Activated CD4-positive, alpha-beta memory T cell treated with anti-CD3 and anti-CD28 coated beads for 36 hours (primary cell): ENCODE measurements at regions of chr2 and their contacts with region 1.

Region 1: GRCh38 chr2:143259368-143259958 is 130.2 kb downstream of the ARHGAP15 start:
- DNase-seq: peak; percentile 79
- H3K4me3 Mint-ChIP-seq: peak overlapping the region; percentile 63
- H3K27ac Mint-ChIP-seq: peak overlapping the region; percentile 89
- H3K4me1 Mint-ChIP-seq: peaks cover 85% of the 10 kb centered on the region
- H3K27me3 Mint-ChIP-seq: no peaks in the 10 kb centered on the region

Region 2: DNA sequence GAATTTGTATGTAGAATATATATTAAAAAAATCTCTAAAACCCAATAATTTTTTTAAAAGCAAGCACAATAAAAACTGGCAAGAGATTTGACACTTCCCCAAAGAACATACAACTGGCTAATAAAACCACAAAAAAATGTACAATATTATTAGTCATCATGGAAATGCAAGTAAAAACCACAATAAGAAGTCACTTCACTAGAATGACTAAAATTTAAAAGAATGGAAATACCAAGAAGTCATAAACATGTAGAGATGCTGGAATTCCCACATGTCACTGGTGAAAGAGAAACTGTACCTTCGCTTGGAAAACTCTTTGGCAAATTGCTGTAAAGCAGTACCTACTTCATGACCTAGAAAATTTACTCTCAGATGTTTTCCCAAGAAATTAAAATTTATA is 425.4 kb before region 1 on chr2:
- CTCF ChIA-PET with region 1: no interaction called
- POLR2A ChIA-PET with region 1: no interaction called
- intact Hi-C with region 1: no loop called
- DNase-seq: no peak
- H3K4me3 Mint-ChIP-seq: no peak overlapping the region
- H3K27ac Mint-ChIP-seq: no peak overlapping the region
- H3K4me1 Mint-ChIP-seq: no peaks in the 10 kb centered on the region
- H3K27me3 Mint-ChIP-seq: peaks cover 2% of the 10 kb centered on the region

Region 3: GRCh38 chr2:142880260-142880659 is 379.2 kb before region 1 on chr2:
- CTCF ChIA-PET with region 1: no interaction called
- POLR2A ChIA-PET with region 1: no interaction called
- intact Hi-C with region 1: no loop called
- DNase-seq: no peak
- H3K4me3 Mint-ChIP-seq: no peak overlapping the region
- H3K27ac Mint-ChIP-seq: no peak overlapping the region
- H3K4me1 Mint-ChIP-seq: no peaks in the 10 kb centered on the region
- H3K27me3 Mint-ChIP-seq: no peaks in the 10 kb centered on the region

Region 4: GRCh38 chr2:143128681-143129580 is 130.5 kb before region 1 on chr2 and contains the start of gene ARHGAP15:
- CTCF ChIA-PET with region 1: interaction called, 26 read pairs
- POLR2A ChIA-PET with region 1: interaction called, 22 read pairs
- intact Hi-C with region 1: loop called (anchors 1 kb)
- DNase-seq: peak; percentile 85
- H3K4me3 Mint-ChIP-seq: peak within 1 kb of the TSS; percentile 83
- H3K27ac Mint-ChIP-seq: peak within 1 kb of the TSS; percentile 100
- H3K4me1 Mint-ChIP-seq: peaks cover 29% of the 10 kb centered on the region
- H3K27me3 Mint-ChIP-seq: no peaks in the 10 kb centered on the region
- total RNA-seq, gene ARHGAP15: 70.2 to 71.2 TPM

Region 5: DNA sequence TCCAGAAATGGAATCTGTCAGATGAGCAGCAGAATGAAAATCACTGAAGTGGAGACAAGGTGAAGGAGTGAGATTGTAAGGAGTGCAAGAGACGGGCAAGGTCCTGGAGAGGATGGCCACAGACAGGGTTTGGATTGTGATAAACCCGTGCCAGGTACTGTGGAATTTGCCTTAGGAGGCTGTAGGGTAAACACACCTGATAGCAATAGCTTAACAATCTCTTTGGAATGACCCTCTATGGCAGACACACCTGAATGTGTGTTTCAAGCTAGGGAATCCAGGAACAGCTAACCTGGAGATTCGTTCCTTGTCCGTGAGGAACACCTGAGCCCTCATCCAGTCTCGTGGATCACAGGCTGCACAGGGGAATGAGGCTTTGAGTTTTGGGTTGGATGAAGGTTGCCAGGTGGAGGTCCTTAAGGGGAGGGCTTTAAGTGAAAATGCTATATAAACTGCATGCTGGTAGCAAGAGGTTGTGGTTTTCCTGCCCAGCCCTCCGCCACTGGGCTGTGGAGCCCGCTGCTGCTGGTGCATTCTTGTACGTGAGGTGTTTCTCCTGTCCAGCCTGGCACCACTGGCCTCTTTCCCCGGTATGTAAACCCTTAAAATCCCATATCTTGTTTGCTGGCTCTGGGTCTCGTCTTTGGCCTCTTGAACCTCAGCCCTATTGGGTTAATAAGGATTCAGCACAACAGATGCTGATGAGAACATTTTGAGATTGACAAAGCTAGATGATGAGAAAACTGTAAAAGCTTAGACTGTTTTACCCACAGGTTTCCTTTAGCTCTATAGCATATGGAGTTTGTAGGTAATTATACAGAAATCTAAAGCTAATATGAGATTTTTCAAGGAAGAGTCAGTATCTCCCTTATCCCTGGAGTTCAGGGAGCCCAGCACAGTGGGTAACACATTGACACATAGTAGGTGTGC is 12.4 kb before region 1 on chr2:
- CTCF ChIA-PET with region 1: interaction called, 28 read pairs
- POLR2A ChIA-PET with region 1: interaction called, 4 read pairs
- intact Hi-C with region 1: loop called (anchors 1 kb)
- DNase-seq: peak; percentile 49
- H3K4me3 Mint-ChIP-seq: no peak overlapping the region
- H3K27ac Mint-ChIP-seq: no peak overlapping the region
- H3K4me1 Mint-ChIP-seq: peaks cover 32% of the 10 kb centered on the region
- H3K27me3 Mint-ChIP-seq: no peaks in the 10 kb centered on the region

Region 6: DNA sequence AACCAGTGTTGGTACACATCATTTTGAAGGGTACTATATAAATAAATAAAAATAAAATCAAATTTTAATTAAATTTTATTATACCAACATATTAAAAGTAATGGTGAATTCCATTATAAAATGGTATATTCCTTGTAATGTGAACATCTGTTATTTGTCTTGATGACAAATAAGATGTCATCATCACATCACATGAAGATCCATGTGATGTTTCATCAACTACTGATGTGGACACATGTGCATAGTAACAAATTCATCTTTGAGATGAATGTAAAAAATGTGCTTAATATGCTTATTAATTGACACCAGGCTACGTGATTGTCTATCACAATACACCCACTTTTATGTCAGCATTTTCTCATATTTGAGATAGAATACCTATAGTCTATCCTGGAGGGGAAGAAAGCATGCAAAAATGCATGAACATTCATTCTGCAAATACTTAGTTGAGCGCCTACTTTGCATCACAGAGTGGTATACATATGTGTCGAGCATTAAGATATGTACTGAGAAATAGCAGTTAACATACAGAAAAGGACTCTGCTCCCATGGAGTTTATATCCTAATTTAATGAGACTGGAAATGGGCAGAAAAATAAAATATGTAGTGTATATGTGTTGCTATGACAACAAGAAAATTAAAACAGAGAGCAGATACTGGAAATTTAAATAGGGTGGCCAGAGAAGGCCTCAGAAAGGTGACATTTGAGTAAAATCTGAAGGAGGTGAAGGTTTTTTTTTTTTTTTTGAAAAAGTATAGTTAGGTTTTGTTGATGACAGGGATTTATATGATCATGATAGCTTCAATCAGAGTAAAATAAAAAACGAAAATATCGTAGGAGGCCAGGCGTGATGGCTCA is 150.8 kb after region 1 on chr2:
- CTCF ChIA-PET with region 1: no interaction called
- POLR2A ChIA-PET with region 1: no interaction called
- intact Hi-C with region 1: no loop called
- DNase-seq: no peak
- H3K4me3 Mint-ChIP-seq: no peak overlapping the region
- H3K27ac Mint-ChIP-seq: no peak overlapping the region
- H3K4me1 Mint-ChIP-seq: peaks cover 42% of the 10 kb centered on the region
- H3K27me3 Mint-ChIP-seq: no peaks in the 10 kb centered on the region

Region 7: DNA sequence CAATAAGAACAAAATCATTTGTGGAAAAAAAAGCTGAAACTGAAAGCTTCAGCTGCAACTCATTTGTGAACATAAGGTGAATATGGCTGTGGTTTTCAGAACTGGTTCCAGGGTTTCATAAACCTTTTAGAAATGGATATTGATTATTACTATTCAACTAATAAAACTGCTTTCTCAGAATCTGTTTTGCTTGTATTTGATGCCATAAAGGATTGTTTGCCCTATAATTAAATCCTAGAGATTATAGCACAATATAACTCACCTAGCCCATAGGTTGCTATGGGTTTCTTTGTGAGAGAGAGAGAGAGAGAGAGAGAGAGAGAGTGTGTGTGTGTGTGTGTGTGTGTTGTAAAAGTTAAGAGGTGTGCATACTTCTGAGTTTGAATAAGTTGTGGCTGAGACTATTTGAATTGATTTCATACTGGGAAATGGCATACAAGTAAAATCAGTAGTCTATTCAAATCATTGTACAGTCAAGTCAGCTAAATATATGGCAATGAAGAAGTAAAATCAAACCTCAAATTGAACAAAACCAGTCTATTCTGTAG is 209.0 kb after region 1 on chr2:
- CTCF ChIA-PET with region 1: no interaction called
- POLR2A ChIA-PET with region 1: no interaction called
- intact Hi-C with region 1: loop called (anchors 2 kb)
- DNase-seq: no peak
- H3K4me3 Mint-ChIP-seq: no peak overlapping the region
- H3K27ac Mint-ChIP-seq: peak overlapping the region; percentile 65
- H3K4me1 Mint-ChIP-seq: peaks cover 45% of the 10 kb centered on the region
- H3K27me3 Mint-ChIP-seq: no peaks in the 10 kb centered on the region

Region 8: GRCh38 chr2:143607231-143608062 is 348.0 kb after region 1 on chr2:
- CTCF ChIA-PET with region 1: no interaction called
- POLR2A ChIA-PET with region 1: no interaction called
- intact Hi-C with region 1: no loop called
- DNase-seq: no peak
- H3K4me3 Mint-ChIP-seq: no peak overlapping the region
- H3K27ac Mint-ChIP-seq: no peak overlapping the region
- H3K4me1 Mint-ChIP-seq: peaks cover 39% of the 10 kb centered on the region
- H3K27me3 Mint-ChIP-seq: no peaks in the 10 kb centered on the region

Region 9: GRCh38 chr2:143802871-143803650 is 543.6 kb after region 1 on chr2:
- CTCF ChIA-PET with region 1: no interaction called
- POLR2A ChIA-PET with region 1: no interaction called
- intact Hi-C with region 1: loop called (anchors 2 kb)
- DNase-seq: no peak
- H3K4me3 Mint-ChIP-seq: peak overlapping the region; percentile 27
- H3K27ac Mint-ChIP-seq: peak overlapping the region; percentile 73
- H3K4me1 Mint-ChIP-seq: peaks cover 17% of the 10 kb centered on the region
- H3K27me3 Mint-ChIP-seq: peaks cover 7% of the 10 kb centered on the region

Region 10: DNA sequence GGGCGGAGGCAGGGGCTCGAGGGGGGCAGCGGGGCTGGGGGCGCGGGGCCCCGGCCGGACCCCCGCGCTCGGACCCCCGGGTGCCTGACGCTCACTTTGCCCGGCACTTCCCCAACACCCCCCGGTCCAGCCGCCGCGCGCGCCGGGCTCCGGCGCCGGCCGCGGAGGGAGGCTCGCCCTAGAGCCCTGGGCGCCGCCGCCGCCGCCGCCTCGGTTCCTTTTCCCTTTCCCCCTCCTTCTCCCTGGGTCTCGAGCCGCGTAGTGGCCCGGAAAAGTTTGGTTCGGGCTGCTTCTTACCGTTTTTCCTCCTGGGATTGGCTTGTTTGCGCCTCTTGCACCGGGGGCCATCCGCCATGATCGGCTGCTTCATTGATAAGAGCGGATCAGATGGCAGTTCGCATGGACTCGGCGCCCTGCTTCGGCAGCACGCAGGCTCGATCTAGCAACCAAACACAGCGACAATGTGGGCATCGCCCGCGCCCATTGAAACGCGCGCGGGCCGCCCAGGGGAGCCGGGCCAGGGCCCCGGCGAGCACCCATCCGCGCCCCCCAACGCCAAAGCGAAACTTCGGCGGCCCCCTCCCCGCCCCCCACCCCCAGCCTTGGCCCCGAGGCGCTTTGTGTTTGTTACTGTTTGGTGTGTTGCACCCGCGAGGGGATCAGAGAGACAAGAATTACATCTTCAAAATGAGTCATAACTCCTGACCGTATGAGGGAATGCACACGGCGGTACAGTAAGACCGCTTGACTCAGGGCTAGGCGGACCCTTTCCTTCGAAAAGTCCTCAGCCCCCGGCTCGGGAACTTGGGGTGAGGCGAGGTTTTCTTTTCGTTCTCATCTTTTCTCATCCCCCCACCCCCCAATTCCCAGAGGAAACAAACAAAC is 1257.8 kb after region 1 on chr2:
- CTCF ChIA-PET with region 1: no interaction called
- POLR2A ChIA-PET with region 1: no interaction called
- intact Hi-C with region 1: loop called (anchors 5 kb)
- DNase-seq: peak; percentile 68
- H3K4me3 Mint-ChIP-seq: no peak overlapping the region
- H3K27ac Mint-ChIP-seq: peak overlapping the region; percentile 97
- H3K4me1 Mint-ChIP-seq: peaks cover 17% of the 10 kb centered on the region
- H3K27me3 Mint-ChIP-seq: peaks cover 46% of the 10 kb centered on the region